HAP-1 (cell line): ENCODE measurements at regions of chr10 and their contacts with region 1.

Region 1: GRCh38 chr10:25875556-25876165 is 58.4 kb upstream of the MYO3A start:
- DNase-seq: peak; percentile 73 to 87
- H3K4me3 ChIP-seq: no peak overlapping the region
- H3K4me1 ChIP-seq: no peaks in the 10 kb centered on the region
- H3K27me3 ChIP-seq: no peaks in the 10 kb centered on the region

Region 2: GRCh38 chr10:26269754-26270153 is 394.1 kb after region 1 on chr10:
- in situ Hi-C with region 1: loop called (anchors 25 kb)
- DNase-seq: peak; percentile 11 to 53
- H3K4me3 ChIP-seq: no peak overlapping the region
- H3K4me1 ChIP-seq: peaks cover 2% of the 10 kb centered on the region; the same call in 1 of the 2 replicates
- H3K27me3 ChIP-seq: no peaks in the 10 kb centered on the region